CD8-positive, alpha-beta T cell (primary cell): ENCODE measurements at regions of chr7 and their contacts with region 1.

Region 1: GRCh38 chr7:74429153-74429747 is 24.5 kb upstream of the GTF2IRD1 start:
- DNase-seq: no peak
- ATAC-seq: no peak
- H3K4me3 ChIP-seq: no peak overlapping the region
- H3K4me3 Mint-ChIP-seq: no peak overlapping the region
- H3K27ac ChIP-seq: no peak overlapping the region
- H3K27ac Mint-ChIP-seq: no peak overlapping the region
- H3K4me1 ChIP-seq: no peaks in the 10 kb centered on the region
- H3K4me1 Mint-ChIP-seq: no peaks in the 10 kb centered on the region
- H3K27me3 ChIP-seq: no peaks in the 10 kb centered on the region
- H3K27me3 Mint-ChIP-seq: no peaks in the 10 kb centered on the region
- CTCF ChIP-seq: no peak

Region 2: DNA sequence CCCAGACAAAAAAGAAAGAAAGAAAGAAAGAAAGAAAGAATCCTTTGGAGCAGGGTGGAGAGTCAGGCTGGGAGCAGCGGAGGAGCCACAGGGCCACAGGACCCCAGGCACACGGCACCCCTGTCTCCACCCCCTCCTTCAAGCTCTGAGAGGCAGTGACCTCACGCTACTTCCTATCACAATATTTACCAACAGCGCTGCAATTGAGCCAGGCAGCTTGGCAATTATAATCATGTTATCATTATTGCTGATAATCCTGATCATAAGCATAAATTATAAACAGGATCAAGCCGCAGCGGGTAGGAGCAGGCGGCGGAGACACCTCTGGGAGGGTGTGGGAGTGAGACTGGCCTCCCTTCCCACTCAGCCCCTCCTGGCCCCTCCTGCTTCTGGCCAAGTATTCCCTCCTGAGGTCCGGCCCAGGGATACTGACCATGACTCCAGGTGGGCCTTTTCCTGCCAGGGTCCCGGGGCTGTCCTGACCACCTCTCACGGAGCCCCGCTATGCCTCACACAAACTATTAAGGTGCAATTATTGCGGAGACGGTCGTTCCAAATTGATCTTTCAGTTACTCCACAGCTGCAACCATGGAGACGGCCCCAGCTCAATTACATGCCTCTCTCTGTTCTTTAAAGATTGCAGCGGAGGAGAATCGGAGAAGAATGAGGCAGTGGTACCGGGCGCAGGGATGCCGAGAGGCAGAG is 14.4 kb after region 1 on chr7:
- CTCF ChIA-PET with region 1: no interaction called
- POLR2A ChIA-PET with region 1: no interaction called
- intact Hi-C with region 1: no loop called
- DNase-seq: no peak
- ATAC-seq: no peak
- H3K4me3 ChIP-seq: no peak overlapping the region
- H3K4me3 Mint-ChIP-seq: no peak overlapping the region
- H3K27ac ChIP-seq: no peak overlapping the region
- H3K27ac Mint-ChIP-seq: no peak overlapping the region
- H3K4me1 ChIP-seq: no peaks in the 10 kb centered on the region
- H3K4me1 Mint-ChIP-seq: no peaks in the 10 kb centered on the region
- H3K27me3 ChIP-seq: no peaks in the 10 kb centered on the region
- H3K27me3 Mint-ChIP-seq: no peaks in the 10 kb centered on the region
- CTCF ChIP-seq: no peak

Region 3: DNA sequence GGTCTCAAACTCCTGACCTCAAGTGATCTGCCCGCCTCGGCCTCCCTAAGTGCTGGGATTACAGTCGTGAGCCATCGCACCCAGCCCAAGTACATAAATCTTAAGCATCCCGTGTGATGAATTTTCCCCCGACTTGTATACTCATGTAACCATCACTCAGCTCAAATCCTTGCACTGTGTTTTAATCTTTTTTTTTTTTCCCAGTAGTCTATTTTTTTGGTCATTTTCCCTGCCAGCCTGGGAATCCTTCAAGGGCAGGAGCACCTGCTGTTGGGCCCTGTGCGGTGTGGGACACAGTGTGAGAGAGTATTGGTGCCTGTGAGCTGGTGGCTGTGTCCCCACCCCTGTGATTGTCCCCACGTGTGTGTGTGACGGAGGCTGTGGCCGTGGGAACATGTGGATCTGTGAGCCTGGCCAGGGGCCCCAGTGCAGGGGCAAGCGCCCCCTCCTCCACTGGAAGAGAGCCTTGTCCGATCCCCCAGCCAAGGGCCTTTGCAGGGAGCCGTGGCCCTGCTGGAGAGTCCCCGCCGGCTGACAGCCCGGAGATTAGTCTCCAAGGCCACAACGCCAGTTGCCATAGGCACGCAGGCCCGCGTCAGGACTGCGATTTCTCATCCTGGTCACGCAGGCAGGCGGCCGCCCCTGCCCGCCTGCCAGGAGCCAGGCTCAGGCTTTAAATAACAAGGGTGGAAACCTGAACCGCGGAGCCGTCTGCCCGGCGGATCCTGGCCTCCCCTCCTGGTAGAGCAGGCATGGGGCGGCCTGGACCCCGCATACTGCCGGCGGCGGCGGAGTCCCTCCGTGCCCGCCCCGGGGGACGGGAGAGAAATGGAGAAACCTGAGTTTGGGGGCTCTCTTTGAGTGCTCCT is 50.9 kb after region 1 on chr7:
- CTCF ChIA-PET with region 1: no interaction called
- POLR2A ChIA-PET with region 1: no interaction called
- intact Hi-C with region 1: loop called in 1 of 2 experiments (anchors 10 kb)
- DNase-seq: no peak
- ATAC-seq: no peak
- H3K4me3 ChIP-seq: no peak overlapping the region
- H3K4me3 Mint-ChIP-seq: no peak overlapping the region
- H3K27ac ChIP-seq: no peak overlapping the region
- H3K27ac Mint-ChIP-seq: no peak overlapping the region
- H3K4me1 ChIP-seq: no peaks in the 10 kb centered on the region
- H3K4me1 Mint-ChIP-seq: no peaks in the 10 kb centered on the region
- H3K27me3 ChIP-seq: no peaks in the 10 kb centered on the region
- H3K27me3 Mint-ChIP-seq: peaks cover 7% of the 10 kb centered on the region
- CTCF ChIP-seq: no peak